Activated CD8-positive, alpha-beta T cell treated with anti-CD3 and anti-CD28 coated beads for 36 hours (primary cell): ENCODE measurements at regions of chr12 and their contacts with region 1.

Region 1: GRCh38 chr12:109858764-109859163 is 21.6 kb downstream of the GLTP start:
- DNase-seq: no peak
- ATAC-seq: peak; percentile 37
- H3K4me3 Mint-ChIP-seq: no peak overlapping the region
- H3K27ac Mint-ChIP-seq: peak overlapping the region; percentile 56
- H3K4me1 Mint-ChIP-seq: peaks cover 6% of the 10 kb centered on the region
- H3K27me3 Mint-ChIP-seq: no peaks in the 10 kb centered on the region
- CTCF ChIP-seq: no peak

Region 2: GRCh38 chr12:109804820-109805761 is 53.7 kb before region 1 on chr12:
- CTCF ChIA-PET with region 1: interaction called, 11 read pairs
- POLR2A ChIA-PET with region 1: no interaction called
- intact Hi-C with region 1: no loop called
- DNase-seq: peak; percentile 74
- ATAC-seq: peak; percentile 93
- H3K4me3 Mint-ChIP-seq: no peak overlapping the region
- H3K27ac Mint-ChIP-seq: no peak overlapping the region
- H3K4me1 Mint-ChIP-seq: no peaks in the 10 kb centered on the region
- H3K27me3 Mint-ChIP-seq: no peaks in the 10 kb centered on the region
- CTCF ChIP-seq: peak; percentile 97

Region 3: DNA sequence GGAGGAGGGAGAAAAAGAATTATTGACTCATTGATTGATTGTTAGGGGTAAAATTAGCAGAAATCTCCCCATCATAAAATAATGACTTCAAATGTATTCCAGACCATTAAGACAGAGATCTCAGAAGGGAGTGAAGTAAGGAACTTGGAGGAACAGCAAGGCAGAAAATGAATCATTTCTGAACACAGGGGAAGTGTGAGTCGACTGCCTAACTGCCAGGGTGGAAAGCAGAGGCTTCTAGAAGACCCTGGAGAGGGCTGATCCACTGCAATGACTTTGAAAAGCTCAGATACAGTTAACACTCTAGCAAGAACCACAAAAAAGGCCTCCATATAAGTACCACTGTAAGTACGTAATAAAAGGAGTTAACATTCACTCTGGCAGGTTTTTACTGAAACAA is 11.9 kb after region 1 on chr12:
- CTCF ChIA-PET with region 1: interaction called, 28 read pairs
- POLR2A ChIA-PET with region 1: interaction called, 3 read pairs
- intact Hi-C with region 1: no loop called
- DNase-seq: no peak
- ATAC-seq: no peak
- H3K4me3 Mint-ChIP-seq: no peak overlapping the region
- H3K27ac Mint-ChIP-seq: no peak overlapping the region
- H3K4me1 Mint-ChIP-seq: peaks cover 19% of the 10 kb centered on the region
- H3K27me3 Mint-ChIP-seq: no peaks in the 10 kb centered on the region
- CTCF ChIP-seq: no peak

Region 4: GRCh38 chr12:109912853-109913321 is 54.1 kb after region 1 on chr12:
- CTCF ChIA-PET with region 1: interaction called, 10 read pairs
- POLR2A ChIA-PET with region 1: no interaction called
- intact Hi-C with region 1: no loop called
- DNase-seq: no peak
- ATAC-seq: no peak
- H3K4me3 Mint-ChIP-seq: no peak overlapping the region
- H3K27ac Mint-ChIP-seq: no peak overlapping the region
- H3K4me1 Mint-ChIP-seq: no peaks in the 10 kb centered on the region
- H3K27me3 Mint-ChIP-seq: no peaks in the 10 kb centered on the region
- CTCF ChIP-seq: no peak

Region 5: DNA sequence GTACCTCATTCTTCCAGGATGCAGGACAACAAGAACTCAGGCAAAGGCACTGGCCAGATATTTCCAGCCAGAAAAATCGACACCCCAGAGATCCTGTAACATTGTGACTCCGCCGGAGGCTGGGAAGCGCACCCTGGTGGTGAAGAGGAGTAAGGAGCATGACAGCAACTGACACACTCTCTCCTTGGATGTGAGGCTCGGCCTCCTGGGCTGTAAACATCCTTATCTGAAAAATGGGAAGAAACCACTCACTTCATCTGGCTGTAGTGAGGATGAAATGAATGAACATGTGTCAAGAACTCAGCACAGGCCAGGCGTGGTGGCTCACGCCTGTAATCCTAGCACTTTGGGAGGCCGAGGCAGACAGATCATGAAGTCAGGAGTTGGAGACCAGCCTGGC is 68.9 kb after region 1 on chr12:
- CTCF ChIA-PET with region 1: interaction called, 34 read pairs
- POLR2A ChIA-PET with region 1: no interaction called
- intact Hi-C with region 1: loop called (anchors 1 kb)
- DNase-seq: peak; percentile 51
- ATAC-seq: peak; percentile 58
- H3K4me3 Mint-ChIP-seq: no peak overlapping the region
- H3K27ac Mint-ChIP-seq: peak overlapping the region; percentile 31
- H3K4me1 Mint-ChIP-seq: no peaks in the 10 kb centered on the region
- H3K27me3 Mint-ChIP-seq: no peaks in the 10 kb centered on the region
- CTCF ChIP-seq: peak; percentile 67